Common myeloid progenitor, CD34-positive (primary cell): ENCODE measurements at regions of chr2 and their contacts with region 1.

Region 1: GRCh38 chr2:37414470-37414949 is 70.1 kb downstream of the QPCT start:
- DNase-seq: peak; percentile 72 to 82 (median 82)
- H3K4me3 ChIP-seq: no peak overlapping the region
- H3K27ac ChIP-seq: no peak overlapping the region
- H3K4me1 ChIP-seq: peaks cover 2 to 18% (median 9%) of the 10 kb centered on the region in 4 experiments
- H3K27me3 ChIP-seq: no peaks in the 10 kb centered on the region

Region 2: GRCh38 chr2:37306024-37306423 is 108.5 kb before region 1 on chr2:
- CTCF ChIA-PET with region 1: no interaction called
- POLR2A ChIA-PET with region 1: no interaction called
- DNase-seq: peak in 2 of 3 donors; percentile 7 to 24
- H3K4me3 ChIP-seq: no peak overlapping the region
- H3K27ac ChIP-seq: no peak overlapping the region
- H3K4me1 ChIP-seq: peaks cover 0 to 2% (median 0%) of the 10 kb centered on the region in 4 experiments
- H3K27me3 ChIP-seq: no peaks in the 10 kb centered on the region

Region 3: DNA sequence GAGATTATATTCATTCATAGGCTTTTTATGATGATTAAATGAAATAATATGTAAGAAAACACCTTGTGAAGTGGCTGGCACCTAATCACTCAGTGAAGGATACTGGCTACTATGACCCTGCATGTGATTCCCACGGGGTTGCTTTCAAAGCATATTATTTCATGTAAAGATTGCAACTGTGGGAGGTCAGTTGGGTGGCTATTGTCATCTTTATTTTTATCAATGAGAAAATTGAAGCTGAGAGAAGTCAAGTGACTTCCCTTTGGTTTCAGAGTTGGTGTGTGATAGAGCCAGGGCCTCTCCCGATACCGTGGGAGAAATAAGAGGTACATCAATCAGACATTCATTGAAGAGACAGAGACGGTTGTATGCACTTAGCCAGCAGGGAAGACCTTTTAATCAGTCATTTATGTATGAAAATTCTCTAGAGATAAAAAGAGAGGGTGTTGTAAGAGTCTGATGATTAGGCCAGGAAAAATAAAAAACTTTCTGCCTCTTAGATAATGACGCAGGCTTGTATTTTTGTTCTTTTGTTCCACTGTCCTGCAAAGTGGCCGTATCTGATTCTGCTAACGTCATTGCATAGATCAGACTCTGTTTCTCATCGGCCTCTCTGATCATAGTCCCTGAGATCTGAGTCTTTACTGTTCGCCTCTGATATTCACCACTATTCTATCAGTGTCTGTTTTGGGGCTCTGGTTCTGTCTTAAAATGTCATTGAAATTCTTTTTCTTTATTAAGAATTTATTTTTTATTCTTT is 19.5 kb before region 1 on chr2:
- CTCF ChIA-PET with region 1: interaction called, 19 read pairs
- POLR2A ChIA-PET with region 1: no interaction called
- DNase-seq: no peak
- H3K4me3 ChIP-seq: no peak overlapping the region
- H3K27ac ChIP-seq: no peak overlapping the region
- H3K4me1 ChIP-seq: peaks cover 7 to 29% (median 9%) of the 10 kb centered on the region in 4 experiments
- H3K27me3 ChIP-seq: no peaks in the 10 kb centered on the region

Region 4: DNA sequence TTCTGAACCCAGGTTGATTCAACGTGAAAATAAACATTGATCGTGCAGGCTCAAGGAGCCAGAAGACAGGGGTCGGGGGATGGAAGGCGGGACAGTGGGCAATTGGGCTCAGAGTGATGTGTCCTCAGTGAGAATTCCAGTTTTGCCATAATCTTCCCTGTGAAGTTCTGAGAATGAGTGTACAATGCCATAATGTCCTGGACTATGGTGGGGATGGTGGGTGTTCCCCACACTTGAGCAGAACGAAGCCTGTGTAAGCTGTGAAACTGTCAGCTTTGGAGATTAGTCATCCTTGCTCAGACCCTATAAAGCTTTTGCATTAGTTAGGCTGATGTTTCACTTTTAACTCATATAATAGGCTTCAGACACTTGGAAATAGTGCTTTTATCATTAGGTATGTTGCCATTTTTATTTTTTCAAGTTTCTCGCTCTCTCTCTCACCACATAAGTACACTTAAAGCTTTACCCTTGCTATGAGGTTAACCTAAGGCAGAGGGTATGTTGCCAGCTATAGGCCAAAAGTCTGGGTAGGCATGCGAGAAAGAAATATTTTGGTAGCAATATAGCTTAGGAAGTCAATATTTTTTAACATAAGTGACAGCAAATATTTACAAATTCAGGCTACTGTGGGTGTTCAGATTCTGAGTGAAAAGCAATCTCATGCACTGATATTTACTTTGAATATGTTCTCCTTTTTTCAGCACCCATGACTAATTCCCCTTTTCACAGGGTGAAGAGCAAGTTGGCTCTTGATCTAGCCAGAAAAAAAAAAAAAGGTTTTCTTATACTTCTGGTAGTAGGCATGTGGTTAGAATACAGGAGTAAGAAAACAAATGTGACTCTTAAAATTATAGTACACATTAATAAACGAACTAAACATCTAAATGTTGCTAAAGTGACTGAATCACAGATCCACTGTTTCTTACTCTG is 209.7 kb after region 1 on chr2:
- CTCF ChIA-PET with region 1: interaction called, 13 read pairs
- POLR2A ChIA-PET with region 1: no interaction called
- DNase-seq: peak in 2 of 3 donors; percentile 61 to 77
- H3K4me3 ChIP-seq: no peak overlapping the region
- H3K27ac ChIP-seq: no peak overlapping the region
- H3K4me1 ChIP-seq: peaks cover 16 to 35% (median 28%) of the 10 kb centered on the region in 4 experiments
- H3K27me3 ChIP-seq: no peaks in the 10 kb centered on the region

Region 5: DNA sequence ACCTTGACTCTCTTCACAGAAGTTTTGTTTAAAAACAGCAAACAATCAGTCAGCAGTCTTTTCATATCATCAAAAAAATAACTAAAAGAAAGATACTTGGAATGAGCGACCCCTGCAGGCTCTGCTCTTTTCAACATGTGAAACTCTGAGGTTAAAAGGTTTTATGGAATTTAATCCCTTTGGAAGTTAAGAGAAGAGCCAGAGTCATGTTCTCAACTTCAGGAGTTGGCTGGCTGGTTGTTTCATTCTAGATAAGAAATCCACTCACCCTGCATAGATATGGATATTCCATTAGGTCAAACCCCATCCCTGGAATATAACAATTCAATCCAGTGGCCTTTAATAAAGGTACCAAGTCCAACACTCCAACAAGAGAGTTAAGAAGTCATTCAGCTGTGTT is 395.0 kb after region 1 on chr2:
- CTCF ChIA-PET with region 1: interaction called, 10 read pairs
- POLR2A ChIA-PET with region 1: no interaction called
- DNase-seq: peak; percentile 19 to 49 (median 41)
- H3K4me3 ChIP-seq: no peak overlapping the region
- H3K27ac ChIP-seq: no peak overlapping the region
- H3K4me1 ChIP-seq: peaks cover 5 to 11% (median 8%) of the 10 kb centered on the region in 4 experiments
- H3K27me3 ChIP-seq: no peaks in the 10 kb centered on the region

Region 6: GRCh38 chr2:37851828-37852584 is 437.5 kb after region 1 on chr2:
- CTCF ChIA-PET with region 1: interaction called, 14 read pairs
- POLR2A ChIA-PET with region 1: no interaction called
- DNase-seq: peak; percentile 42 to 83 (median 71)
- H3K4me3 ChIP-seq: peak overlapping the region in 1 of 7 experiments; percentile 43
- H3K27ac ChIP-seq: peak overlapping the region; percentile 37 to 70
- H3K4me1 ChIP-seq: peaks cover 19 to 68% (median 60%) of the 10 kb centered on the region in 4 experiments
- H3K27me3 ChIP-seq: no peaks in the 10 kb centered on the region